Heart right ventricle (tissue), 16 donors: ENCODE measurements at regions of chr15 and their contacts with region 1.

Region 1: GRCh38 chr15:51888593-51889195 is 59.2 kb downstream of the TMOD3 start:
- DNase-seq: no peak
- ATAC-seq: peak in 2 of 8 donors; percentile 40 to 56
- H3K4me3 ChIP-seq: no peak overlapping the region
- H3K27ac ChIP-seq: no peak overlapping the region
- H3K4me1 ChIP-seq: peaks cover 0 to 25% (median 13%) of the 10 kb centered on the region in 9 donors
- H3K27me3 ChIP-seq: no peaks in the 10 kb centered on the region
- CTCF ChIP-seq: peak; percentile 43 to 86 (median 72)

Region 2: DNA sequence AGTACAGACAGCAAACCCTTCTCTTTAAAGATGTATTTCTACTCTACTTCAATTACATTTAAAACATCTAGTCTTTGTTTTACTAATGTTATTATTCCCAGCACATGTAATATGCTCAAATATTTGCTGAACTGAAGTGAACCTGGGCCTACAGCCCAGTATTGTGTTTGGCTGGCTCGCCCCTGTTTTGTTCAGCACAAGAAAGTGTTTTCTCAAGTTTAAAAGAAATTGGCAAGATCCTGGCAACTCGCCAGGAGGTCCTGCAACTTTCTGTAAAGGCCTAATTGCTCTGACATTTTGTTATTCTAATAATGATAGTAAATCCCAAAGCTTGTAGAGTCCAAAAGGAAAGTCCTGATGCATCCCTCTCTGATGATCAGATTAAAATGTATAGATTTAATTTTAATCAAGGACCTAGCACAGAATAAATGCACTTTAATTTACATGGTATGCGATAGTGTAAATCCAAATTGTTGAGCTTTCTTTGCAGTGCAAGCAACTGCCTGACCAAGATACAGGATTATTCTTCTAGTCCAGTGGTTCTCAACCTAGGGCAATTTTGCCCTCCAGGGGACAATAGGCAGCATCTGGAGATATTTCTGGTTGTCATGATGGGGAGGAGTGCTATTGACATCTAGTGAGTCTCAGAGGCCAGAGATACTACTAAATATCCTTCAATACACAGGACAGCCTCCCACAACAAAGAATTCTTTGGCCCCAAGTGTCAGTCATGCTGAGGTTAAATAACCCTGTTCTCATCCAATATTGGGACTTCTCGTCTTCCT is 95.0 kb before region 1 on chr15:
- intact Hi-C with region 1: loop called in 1 of 10 experiments (anchors 10 kb)
- DNase-seq: peak; percentile 58 to 72
- ATAC-seq: peak in 5 of 8 donors; percentile 70 to 87 (median 79)
- H3K4me3 ChIP-seq: no peak overlapping the region
- H3K27ac ChIP-seq: peak overlapping the region in 4 of 10 donors; percentile 20 to 46 (median 39)
- H3K4me1 ChIP-seq: peaks cover 3 to 20% (median 13%) of the 10 kb centered on the region in 9 donors
- H3K27me3 ChIP-seq: no peaks in the 10 kb centered on the region
- CTCF ChIP-seq: no peak

Region 3: DNA sequence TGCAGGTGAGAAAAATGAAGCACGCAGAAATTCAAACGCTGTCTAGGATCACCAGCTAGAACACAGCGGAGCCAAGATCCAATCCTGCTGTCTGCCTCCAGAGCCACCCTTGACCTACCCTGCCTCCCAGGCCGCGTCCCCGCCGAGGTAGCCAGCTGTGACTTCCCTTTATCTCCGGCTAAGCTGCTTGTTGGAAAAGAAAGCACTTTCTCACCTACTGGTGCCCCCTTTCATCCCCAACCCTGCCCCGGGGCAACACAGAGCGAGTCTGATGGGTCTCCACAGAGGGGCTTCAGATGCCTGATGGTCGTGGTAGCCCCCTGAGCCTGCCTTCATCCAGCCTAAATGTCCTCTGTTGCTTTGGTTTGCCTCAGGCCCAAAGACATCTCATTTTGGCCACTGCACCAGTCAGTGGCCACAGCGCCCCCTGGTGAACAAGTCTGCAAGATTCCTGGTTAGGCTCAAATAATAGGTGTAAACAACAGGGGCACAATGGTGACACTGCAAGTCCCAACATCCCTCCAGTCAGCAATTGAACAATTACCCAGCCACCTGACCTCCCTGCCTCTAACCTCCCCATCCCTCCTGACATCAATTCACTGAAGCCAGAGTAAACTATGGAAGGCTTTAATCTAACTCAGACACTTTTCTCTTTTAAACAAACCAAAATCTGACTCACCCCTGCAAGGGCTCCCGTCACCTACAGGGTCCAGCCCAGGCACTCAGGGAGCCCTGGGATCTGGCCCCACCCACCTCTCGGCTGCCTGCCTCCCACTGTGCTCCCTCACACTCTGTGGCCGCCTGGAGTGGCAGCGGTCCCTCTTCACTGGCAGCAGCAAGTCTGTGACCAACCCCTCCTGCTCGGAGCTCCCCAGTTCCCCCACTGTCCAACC is 251.2 kb after region 1 on chr15:
- intact Hi-C with region 1: loop called in 1 of 10 experiments (anchors 5 kb)
- DNase-seq: peak; percentile 44 to 64
- ATAC-seq: peak in 7 of 8 donors; percentile 22 to 71 (median 39)
- H3K4me3 ChIP-seq: no peak overlapping the region
- H3K27ac ChIP-seq: no peak overlapping the region
- H3K4me1 ChIP-seq: peaks cover 0 to 34% (median 9%) of the 10 kb centered on the region in 9 donors
- H3K27me3 ChIP-seq: no peaks in the 10 kb centered on the region
- CTCF ChIP-seq: peak; percentile 48 to 80 (median 75)